ENCODE measurements at regions of chr1 and their contacts with region 1.

Region 1: DNA sequence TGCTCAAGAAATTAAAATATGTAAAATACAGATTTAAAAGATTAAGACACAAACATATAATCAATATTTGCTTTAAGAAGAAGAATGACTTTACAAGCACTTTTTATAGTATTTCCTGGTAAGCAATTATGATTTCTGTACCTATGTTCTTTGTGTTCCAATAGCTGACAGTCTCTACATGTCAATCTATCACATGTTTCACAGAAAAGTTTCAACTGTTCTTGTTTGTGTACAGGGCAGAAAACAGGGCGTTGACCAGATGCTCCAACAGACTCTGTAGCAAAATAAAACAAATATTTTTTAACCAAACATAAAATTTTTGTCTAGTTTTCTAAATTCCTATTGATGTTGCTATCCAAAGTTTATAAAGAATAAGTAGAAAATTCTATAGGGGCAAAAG is 48.0 kb downstream of the TRIM33 start:
- DNase-seq: no peak
- H3K4me3 ChIP-seq: no peak overlapping the region
- H3K27ac ChIP-seq: no peak overlapping the region
- H3K4me1 ChIP-seq: peaks cover 7% of the 10 kb centered on the region; the same call in 1 of the 2 replicates
- H3K27me3 ChIP-seq: no peaks in the 10 kb centered on the region
- CTCF ChIP-seq: no peak

Region 2: GRCh38 chr1:114502080-114502479 is 39.1 kb after region 1 on chr1:
- CTCF ChIA-PET with region 1: no interaction called
- POLR2A ChIA-PET with region 1: no interaction called
- intact Hi-C with region 1: loop called (anchors 1 kb)
- DNase-seq: no peak
- H3K4me3 ChIP-seq: no peak overlapping the region
- H3K27ac ChIP-seq: no peak overlapping the region
- H3K4me1 ChIP-seq: peaks cover 9% of the 10 kb centered on the region
- H3K27me3 ChIP-seq: no peaks in the 10 kb centered on the region
- CTCF ChIP-seq: no peak

Region 3: DNA sequence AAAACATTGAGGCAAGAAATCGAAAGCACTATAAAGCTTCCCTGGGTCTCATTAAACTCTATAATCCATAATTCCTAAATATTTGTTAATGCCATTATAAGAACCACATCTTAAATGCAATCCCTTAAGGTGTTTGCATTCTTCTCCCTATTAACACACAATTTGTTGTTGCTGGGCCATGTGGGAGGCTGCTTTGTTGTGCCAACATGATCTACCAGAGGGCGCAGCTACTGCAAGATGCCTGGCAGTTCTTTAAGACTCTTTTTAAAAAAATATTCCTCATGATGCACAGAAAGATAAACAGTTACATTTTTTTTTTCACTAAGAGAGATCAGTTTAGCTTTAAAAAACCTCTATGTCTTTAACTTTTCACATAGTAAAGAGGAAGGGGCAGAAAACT is 157.5 kb after region 1 on chr1:
- CTCF ChIA-PET with region 1: no interaction called
- POLR2A ChIA-PET with region 1: no interaction called
- intact Hi-C with region 1: no loop called
- DNase-seq: no peak
- H3K4me3 ChIP-seq: no peak overlapping the region
- H3K27ac ChIP-seq: no peak overlapping the region
- H3K4me1 ChIP-seq: no peaks in the 10 kb centered on the region
- H3K27me3 ChIP-seq: no peaks in the 10 kb centered on the region
- CTCF ChIP-seq: no peak; the same call in 1 of the 2 replicates

Region 4: GRCh38 chr1:115829023-115829693 is 1366.2 kb after region 1 on chr1:
- CTCF ChIA-PET with region 1: no interaction called
- POLR2A ChIA-PET with region 1: no interaction called
- intact Hi-C with region 1: no loop called
- DNase-seq: peak; percentile 34 to 73
- H3K4me3 ChIP-seq: no peak overlapping the region
- H3K27ac ChIP-seq: no peak overlapping the region
- H3K4me1 ChIP-seq: no peaks in the 10 kb centered on the region
- H3K27me3 ChIP-seq: no peaks in the 10 kb centered on the region
- CTCF ChIP-seq: no peak

Measured in PC-9 (cell line).